Left ventricle myocardium inferior (tissue), 1 donor: ENCODE measurements at regions of chr2 and their contacts with region 1.

Region 1: DNA sequence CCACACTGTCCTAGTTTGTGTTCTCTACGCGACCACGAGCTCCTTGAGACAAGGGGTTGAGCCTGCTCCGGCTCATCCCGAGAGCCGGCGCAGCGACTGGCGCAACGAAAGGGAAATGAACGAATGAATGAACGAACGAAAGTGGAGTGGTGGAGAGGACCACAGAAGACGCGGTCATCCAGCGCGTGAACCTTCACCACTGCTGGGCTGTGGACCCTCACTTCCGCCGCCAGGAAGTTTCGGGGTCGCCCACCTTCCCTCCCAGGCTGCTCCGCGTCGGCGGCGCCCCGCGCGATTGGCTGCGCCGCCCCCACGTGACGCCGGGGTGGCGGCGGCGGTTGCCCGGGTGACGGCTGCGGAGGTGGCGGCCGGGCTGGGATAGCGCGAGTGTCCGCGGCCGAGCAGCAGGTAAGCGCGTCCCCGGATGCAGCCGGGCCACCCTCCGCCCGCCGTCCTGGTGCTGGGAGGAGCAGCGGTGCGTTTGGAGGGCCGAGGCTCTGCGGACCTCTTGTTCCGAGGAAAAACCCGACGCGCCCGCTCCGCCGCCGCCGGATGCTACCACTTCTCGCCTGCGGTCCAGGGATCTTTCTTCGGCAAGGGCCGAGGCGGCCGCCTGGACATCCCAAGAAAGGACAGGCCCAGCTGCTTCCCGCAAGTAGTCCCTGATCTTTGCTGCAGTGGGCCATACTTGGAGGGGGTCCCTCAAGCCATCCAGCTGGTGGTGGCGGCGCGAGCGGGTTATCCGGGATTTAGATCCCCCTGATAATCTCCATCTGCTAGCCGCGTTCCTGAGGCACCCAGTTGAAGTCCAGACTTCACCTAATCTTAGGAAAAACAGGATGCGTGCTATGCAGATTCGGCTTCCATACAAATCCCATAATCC is at the start of gene ARMC9:
- DNase-seq: peak; percentile 76
- H3K4me3 ChIP-seq: peak within 1 kb of the TSS; percentile 83
- H3K27ac ChIP-seq: peak within 1 kb of the TSS; percentile 63
- H3K4me1 ChIP-seq: peaks cover 22% of the 10 kb centered on the region
- H3K27me3 ChIP-seq: no peaks in the 10 kb centered on the region
- CTCF ChIP-seq: no peak
- total RNA-seq, gene ARMC9: 3.1 TPM

Region 2: DNA sequence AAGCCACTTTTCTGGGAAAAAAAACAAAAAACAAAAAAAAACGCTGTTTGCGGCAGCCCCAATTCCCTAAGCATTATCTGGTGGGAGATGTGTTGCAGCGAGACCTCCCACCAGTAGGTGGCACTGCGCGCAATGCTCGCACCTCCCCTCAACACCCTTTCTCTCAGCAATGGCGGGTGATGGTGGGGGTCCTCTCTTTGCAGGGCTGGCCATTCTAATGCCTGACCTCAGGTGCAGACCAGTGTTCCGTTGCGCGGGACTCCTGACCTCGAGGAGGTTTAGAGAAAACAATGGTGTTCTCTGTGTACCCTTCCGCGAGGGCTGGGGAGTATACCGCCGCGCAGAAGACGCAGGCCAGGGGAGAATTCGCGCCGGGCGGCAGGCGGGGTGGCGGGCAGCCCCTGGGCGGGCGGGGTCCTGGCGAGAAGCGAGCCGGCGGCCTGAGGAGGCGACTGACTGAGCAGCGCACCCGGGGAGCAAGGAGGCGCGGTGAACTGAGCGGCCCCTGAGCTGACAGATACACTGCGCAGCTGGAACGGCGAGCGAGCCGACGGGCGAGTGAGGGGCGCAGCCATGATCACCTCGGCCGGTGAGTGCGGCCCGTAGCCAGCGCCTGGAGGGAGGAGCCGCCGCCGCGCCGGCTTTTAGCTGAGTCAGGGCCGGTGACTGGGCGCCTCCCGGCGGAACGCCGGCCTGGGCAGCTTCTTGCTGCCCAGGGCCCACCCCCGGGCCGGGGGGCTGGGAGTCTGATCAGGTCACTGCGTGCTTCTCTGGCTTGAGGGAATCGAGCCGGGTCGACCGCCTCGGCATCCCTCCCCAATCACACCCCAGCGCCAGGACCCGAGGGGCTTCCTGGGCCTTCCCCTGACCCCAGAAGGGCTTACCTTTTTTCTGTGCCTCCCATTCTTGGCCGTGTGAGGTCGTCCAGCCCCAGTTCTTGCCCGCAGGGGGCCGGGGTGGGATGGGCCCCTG is 141.8 kb before region 1 on chr2 and contains the start of gene PSMD1:
- intact Hi-C with region 1: no loop called
- DNase-seq: peak; percentile 94
- H3K4me3 ChIP-seq: peak within 1 kb of the TSS; percentile 100
- H3K27ac ChIP-seq: peak within 1 kb of the TSS; percentile 98
- H3K4me1 ChIP-seq: peaks cover 51% of the 10 kb centered on the region
- H3K27me3 ChIP-seq: no peaks in the 10 kb centered on the region
- CTCF ChIP-seq: peak; percentile 95
- total RNA-seq, gene PSMD1: 90.5 TPM

Region 3: GRCh38 chr2:231104115-231104713 is 94.3 kb before region 1 on chr2:
- intact Hi-C with region 1: loop called (anchors 10 kb)
- DNase-seq: peak; percentile 29
- H3K4me3 ChIP-seq: no peak overlapping the region
- H3K27ac ChIP-seq: no peak overlapping the region
- H3K4me1 ChIP-seq: peaks cover 13% of the 10 kb centered on the region
- H3K27me3 ChIP-seq: no peaks in the 10 kb centered on the region
- CTCF ChIP-seq: peak; percentile 87